K562 (cell line): ENCODE measurements at regions of chr10 and their contacts with region 1.

Region 1: GRCh38 chr10:28676968-28677887 is at the start of gene BAMBI:
- DNase-seq: peak; percentile 93 to 95 (median 94)
- ATAC-seq: peak; percentile 93
- H3K4me3 ChIP-seq: peak within 1 kb of the TSS; percentile 78
- H3K27ac ChIP-seq: peak within 1 kb of the TSS; percentile 64
- H3K4me1 ChIP-seq: peaks cover 24 to 30% of the 10 kb centered on the region in 2 experiments
- H3K27me3 ChIP-seq: no peaks in the 10 kb centered on the region
- CTCF ChIP-seq: peak; percentile 60 to 89 (median 72)
- EP300 ChIP-seq: no peak
- POLR2A ChIP-seq: peak; percentile 89
- RAD21 ChIP-seq: peak; percentile 85 to 87
- polyA plus RNA-seq, gene BAMBI: 2.0 to 2.9 TPM

Region 2: GRCh38 chr10:28710202-28710886 is 33.1 kb after region 1 on chr10:
- CTCF ChIA-PET with region 1: no interaction called
- POLR2A ChIA-PET with region 1: no interaction called
- in situ Hi-C with region 1: no loop called
- intact Hi-C with region 1: no loop called
- DNase-seq: no peak
- ATAC-seq: no peak
- H3K4me3 ChIP-seq: no peak overlapping the region
- H3K27ac ChIP-seq: no peak overlapping the region
- H3K4me1 ChIP-seq: peaks cover 2 to 6% of the 10 kb centered on the region in 2 experiments; a peak in 4 of 5 replicates
- H3K27me3 ChIP-seq: no peaks in the 10 kb centered on the region
- CTCF ChIP-seq: no peak
- EP300 ChIP-seq: no peak
- POLR2A ChIP-seq: no peak
- RAD21 ChIP-seq: no peak

Region 3: GRCh38 chr10:28722065-28722803 is 45.0 kb after region 1 on chr10:
- CTCF ChIA-PET with region 1: no interaction called
- POLR2A ChIA-PET with region 1: no interaction called
- in situ Hi-C with region 1: no loop called
- intact Hi-C with region 1: no loop called
- DNase-seq: no peak
- ATAC-seq: no peak
- H3K4me3 ChIP-seq: no peak overlapping the region
- H3K27ac ChIP-seq: no peak overlapping the region
- H3K4me1 ChIP-seq: peaks cover 7% of the 10 kb centered on the region in 2 experiments; a peak in 3 of 5 replicates
- H3K27me3 ChIP-seq: no peaks in the 10 kb centered on the region
- CTCF ChIP-seq: no peak
- EP300 ChIP-seq: no peak
- POLR2A ChIP-seq: no peak
- RAD21 ChIP-seq: no peak

Region 4: GRCh38 chr10:28734941-28735759 is 57.9 kb after region 1 on chr10:
- CTCF ChIA-PET with region 1: interaction called, 3 read pairs
- POLR2A ChIA-PET with region 1: interaction called, 4 read pairs
- in situ Hi-C with region 1: no loop called
- intact Hi-C with region 1: loop called (anchors 2 kb)
- DNase-seq: peak; percentile 73 to 89 (median 82)
- ATAC-seq: peak; percentile 88
- H3K4me3 ChIP-seq: no peak overlapping the region
- H3K27ac ChIP-seq: peak overlapping the region; percentile 74
- H3K4me1 ChIP-seq: peaks cover 9 to 28% of the 10 kb centered on the region in 2 experiments
- H3K27me3 ChIP-seq: no peaks in the 10 kb centered on the region
- CTCF ChIP-seq: no peak
- EP300 ChIP-seq: peak; percentile 67
- POLR2A ChIP-seq: no peak
- RAD21 ChIP-seq: peak in 1 of 2 experiments; percentile 4; a peak in 1 of 4 replicates

Region 5: DNA sequence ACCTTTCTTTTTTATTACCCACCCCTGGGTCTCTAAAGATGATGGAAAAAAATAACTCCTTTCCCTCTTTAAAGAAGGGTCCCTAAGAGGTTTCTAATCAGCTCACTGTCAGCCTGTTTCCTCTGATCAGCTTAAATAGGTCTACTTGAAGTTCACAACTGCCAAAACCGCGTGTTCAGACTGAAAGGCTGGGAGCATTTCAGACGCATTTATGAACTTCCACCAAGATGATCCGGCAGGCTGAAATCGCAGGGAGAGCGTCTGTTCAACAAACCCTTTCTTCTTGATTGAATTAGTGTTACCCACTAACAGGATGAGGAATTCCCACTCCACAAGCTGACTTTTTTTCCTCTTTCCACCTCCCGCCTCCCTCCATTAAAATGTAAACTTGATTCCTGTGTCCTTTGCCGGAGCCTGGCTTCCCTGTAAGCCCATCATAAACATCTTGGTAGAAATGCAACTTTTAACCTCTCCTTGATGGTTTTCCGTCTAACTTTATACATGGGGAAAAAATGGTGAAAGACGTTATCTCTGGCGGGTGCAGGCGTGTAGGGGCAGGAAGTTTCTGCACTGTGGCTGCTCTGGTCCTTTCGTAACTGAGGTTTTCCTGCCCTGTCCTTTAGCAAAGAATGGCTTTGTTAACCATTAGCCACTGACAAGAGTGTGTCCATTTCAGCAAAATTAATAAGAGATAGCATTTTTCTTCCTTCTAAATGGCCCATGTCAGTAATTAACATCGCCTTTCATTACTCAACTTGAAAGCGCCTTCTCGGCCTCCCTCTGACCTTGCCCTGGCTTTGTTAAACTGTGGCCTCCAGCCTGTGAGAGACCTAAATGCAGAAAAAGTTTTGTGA is 130.8 kb after region 1 on chr10:
- CTCF ChIA-PET with region 1: no interaction called
- POLR2A ChIA-PET with region 1: interaction called, 3 read pairs
- in situ Hi-C with region 1: no loop called
- intact Hi-C with region 1: loop called (anchors 5 kb)
- DNase-seq: peak in 3 of 4 experiments; percentile 26 to 85 (median 61)
- ATAC-seq: peak; percentile 50
- H3K4me3 ChIP-seq: peak overlapping the region; percentile 5; the same call in 1 of the 2 replicates
- H3K27ac ChIP-seq: peak overlapping the region; percentile 98
- H3K4me1 ChIP-seq: peaks cover 41 to 74% of the 10 kb centered on the region in 2 experiments
- H3K27me3 ChIP-seq: no peaks in the 10 kb centered on the region
- CTCF ChIP-seq: no peak
- EP300 ChIP-seq: no peak; the same call in 1 of the 2 replicates
- POLR2A ChIP-seq: peak; percentile 59
- RAD21 ChIP-seq: no peak

Region 6: DNA sequence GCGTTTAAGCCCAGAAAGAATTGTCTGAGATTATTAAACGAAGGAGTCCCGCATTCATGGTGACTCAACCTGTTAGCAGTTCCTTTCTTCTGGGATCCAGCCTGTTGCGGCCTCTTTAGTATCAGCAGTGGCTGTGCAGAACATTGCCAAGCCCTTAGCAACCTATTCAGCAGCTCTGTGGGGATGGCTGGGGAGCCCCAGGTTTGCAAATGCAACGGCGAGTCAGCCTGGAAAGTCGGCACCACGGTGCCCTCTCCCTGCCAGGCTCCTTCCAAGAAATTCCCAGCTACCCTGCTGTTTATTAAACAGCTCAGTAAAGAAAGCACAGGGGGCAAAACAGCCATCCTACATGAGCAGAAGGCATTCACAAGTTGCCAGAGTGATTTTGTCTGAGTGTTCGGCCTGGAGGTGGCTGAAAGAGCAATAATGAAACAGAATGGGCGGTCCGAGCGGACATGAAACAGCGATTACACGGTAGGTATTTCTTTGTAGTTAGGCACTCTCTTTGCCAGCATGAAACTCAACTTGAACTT is 198.4 kb after region 1 on chr10:
- CTCF ChIA-PET with region 1: interaction called, 3 read pairs
- POLR2A ChIA-PET with region 1: interaction called, 3 read pairs
- in situ Hi-C with region 1: loop called (anchors 10 kb)
- intact Hi-C with region 1: loop called (anchors 2 kb)
- DNase-seq: no peak
- ATAC-seq: no peak
- H3K4me3 ChIP-seq: no peak overlapping the region
- H3K27ac ChIP-seq: no peak overlapping the region
- H3K4me1 ChIP-seq: peaks cover 0 to 3% of the 10 kb centered on the region in 2 experiments; a peak in 1 of 5 replicates
- H3K27me3 ChIP-seq: no peaks in the 10 kb centered on the region
- CTCF ChIP-seq: no peak
- EP300 ChIP-seq: no peak
- POLR2A ChIP-seq: no peak
- RAD21 ChIP-seq: no peak

Region 7: DNA sequence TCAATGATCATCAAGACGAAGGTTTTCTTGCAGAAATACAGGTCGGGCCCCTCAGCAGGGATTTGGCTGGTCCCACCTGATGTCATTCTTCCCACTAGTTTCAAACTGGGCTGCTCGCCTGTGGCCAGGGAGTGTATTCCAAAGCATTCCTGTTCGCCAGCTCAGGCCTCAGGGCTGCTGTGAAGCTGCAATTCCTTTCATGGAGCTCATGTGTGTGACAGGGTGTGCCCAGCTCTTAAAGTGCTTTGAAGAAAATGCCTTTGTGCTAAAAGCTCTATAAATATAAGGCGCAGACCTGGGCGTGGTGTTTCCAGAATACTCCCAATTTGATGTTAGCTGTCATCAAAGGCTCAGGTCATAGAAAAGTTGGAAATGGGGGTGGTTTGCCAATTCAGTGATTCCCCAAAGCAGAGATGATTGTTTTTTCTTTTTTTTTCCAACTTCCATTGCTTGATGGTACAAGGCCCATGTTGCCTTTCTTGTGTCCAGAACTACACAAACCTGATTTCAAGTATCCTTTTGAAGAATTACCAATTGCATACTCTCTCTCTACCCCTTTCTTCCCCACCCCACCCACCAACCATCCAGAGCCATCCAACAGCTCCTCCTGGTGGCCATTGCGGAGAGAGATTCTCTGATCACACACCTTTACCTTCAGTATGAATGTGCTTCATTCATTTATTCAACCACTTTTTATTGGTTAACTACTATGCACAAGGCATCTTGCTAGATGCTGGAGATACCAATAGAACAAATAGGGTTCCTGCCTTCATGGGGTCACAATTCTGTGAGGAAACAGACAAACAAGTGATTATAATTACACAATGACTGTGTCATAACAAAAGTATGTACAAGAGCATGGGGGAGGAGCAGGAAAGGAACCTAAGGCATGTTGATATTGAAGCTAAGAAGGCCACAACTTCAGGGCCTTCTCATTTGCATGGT is 314.4 kb after region 1 on chr10:
- CTCF ChIA-PET with region 1: interaction called, 8 read pairs
- POLR2A ChIA-PET with region 1: interaction called, 4 read pairs
- in situ Hi-C with region 1: no loop called
- intact Hi-C with region 1: loop called (anchors 2 kb)
- DNase-seq: peak; percentile 62 to 79 (median 71)
- ATAC-seq: peak; percentile 96
- H3K4me3 ChIP-seq: no peak overlapping the region
- H3K27ac ChIP-seq: no peak overlapping the region
- H3K4me1 ChIP-seq: peaks cover 0 to 4% of the 10 kb centered on the region in 2 experiments; a peak in 4 of 5 replicates
- H3K27me3 ChIP-seq: peaks cover 2 to 8% of the 10 kb centered on the region in 2 experiments; a peak in 1 of 5 replicates
- CTCF ChIP-seq: peak; percentile 90 to 93 (median 90)
- EP300 ChIP-seq: no peak
- POLR2A ChIP-seq: no peak
- RAD21 ChIP-seq: peak; percentile 97 to 99

Region 8: GRCh38 chr10:29131952-29132820 is 455.0 kb after region 1 on chr10:
- CTCF ChIA-PET with region 1: interaction called, 5 read pairs
- POLR2A ChIA-PET with region 1: no interaction called
- in situ Hi-C with region 1: loop called (anchors 25 kb)
- intact Hi-C with region 1: loop called (anchors 2 kb)
- DNase-seq: peak; percentile 50 to 92 (median 74)
- ATAC-seq: peak; percentile 97
- H3K4me3 ChIP-seq: peak overlapping the region; percentile 4; the same call in 1 of the 2 replicates
- H3K27ac ChIP-seq: peak overlapping the region; percentile 70
- H3K4me1 ChIP-seq: peaks cover 15 to 29% of the 10 kb centered on the region in 2 experiments
- H3K27me3 ChIP-seq: no peaks in the 10 kb centered on the region
- CTCF ChIP-seq: no peak
- EP300 ChIP-seq: peak; percentile 91
- POLR2A ChIP-seq: no peak
- RAD21 ChIP-seq: peak; percentile 6 to 16; a peak in 1 of 4 replicates